AG04449 (cell line): ENCODE measurements at regions of chr4 and their contacts with region 1.

Region 1: GRCh38 chr4:106329041-106329618 is 12.8 kb downstream of the AIMP1 start:
- DNase-seq: no peak
- H3K4me3 ChIP-seq: no peak overlapping the region
- CTCF ChIP-seq: peak; percentile 54

Region 2: DNA sequence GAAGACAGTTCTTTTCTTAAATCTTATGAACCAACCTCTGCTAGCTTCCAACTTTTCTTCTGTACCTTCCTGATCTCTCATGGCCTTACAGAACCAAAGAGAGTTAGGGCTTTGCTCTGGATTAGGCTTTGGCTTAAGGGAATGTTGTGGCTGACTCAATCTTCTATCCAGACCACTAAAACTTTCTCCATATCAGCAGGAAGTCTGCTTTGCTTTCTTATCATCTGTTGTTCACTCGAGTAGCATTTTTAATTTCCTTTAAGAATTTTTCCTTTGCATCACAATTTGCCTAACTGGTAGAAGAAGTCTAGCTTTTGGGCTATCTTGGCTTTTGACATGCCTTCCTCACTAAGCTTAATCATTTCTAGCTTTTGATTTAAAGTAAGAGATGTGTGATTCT is 180.1 kb before region 1 on chr4:
- CTCF ChIA-PET with region 1: no interaction called
- POLR2A ChIA-PET with region 1: no interaction called
- DNase-seq: no peak
- H3K4me3 ChIP-seq: no peak overlapping the region
- CTCF ChIP-seq: no peak

Region 3: DNA sequence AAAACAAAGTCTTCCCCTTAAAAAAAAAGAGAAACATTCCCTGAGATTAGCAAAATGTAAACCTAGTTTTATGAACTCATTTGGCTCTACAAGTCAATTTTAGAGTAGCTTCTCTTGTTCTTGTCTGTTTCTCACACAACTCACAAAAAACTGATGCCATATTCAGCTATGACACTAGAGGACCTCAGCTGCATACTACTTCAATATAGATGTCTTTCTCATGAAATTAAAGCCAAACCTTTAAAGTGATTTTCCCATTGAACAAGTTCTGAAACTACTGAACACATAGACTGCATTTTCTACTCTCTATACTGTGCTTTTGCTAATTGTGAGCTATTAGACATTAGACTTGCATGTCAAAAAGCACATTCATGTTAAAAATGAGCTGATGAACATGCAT is 62.9 kb before region 1 on chr4:
- CTCF ChIA-PET with region 1: interaction called, 13 read pairs
- POLR2A ChIA-PET with region 1: no interaction called
- DNase-seq: peak; percentile 17
- H3K4me3 ChIP-seq: no peak overlapping the region
- CTCF ChIP-seq: peak; percentile 51

Region 4: DNA sequence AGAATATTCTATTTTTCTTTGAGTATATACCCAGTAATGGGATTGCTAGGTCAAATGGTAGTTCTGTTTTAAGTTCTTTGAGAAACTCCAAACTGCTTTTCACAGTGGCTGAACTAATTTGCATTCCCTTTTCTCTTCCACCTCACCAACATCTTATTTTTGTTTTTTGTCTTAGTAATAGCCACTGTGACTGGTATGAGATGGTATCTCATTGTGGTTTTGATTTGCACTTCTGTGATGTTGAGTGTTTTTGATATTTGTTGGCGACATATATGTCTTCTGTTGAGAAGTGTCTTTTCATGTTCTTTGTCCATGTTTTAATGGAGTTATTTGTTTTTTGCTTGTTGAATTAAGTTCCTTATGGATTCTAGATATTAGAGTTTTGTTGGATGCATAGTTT is 11.6 kb after region 1 on chr4:
- CTCF ChIA-PET with region 1: interaction called, 29 read pairs
- POLR2A ChIA-PET with region 1: no interaction called
- DNase-seq: no peak
- H3K4me3 ChIP-seq: no peak overlapping the region
- CTCF ChIP-seq: no peak

Region 5: DNA sequence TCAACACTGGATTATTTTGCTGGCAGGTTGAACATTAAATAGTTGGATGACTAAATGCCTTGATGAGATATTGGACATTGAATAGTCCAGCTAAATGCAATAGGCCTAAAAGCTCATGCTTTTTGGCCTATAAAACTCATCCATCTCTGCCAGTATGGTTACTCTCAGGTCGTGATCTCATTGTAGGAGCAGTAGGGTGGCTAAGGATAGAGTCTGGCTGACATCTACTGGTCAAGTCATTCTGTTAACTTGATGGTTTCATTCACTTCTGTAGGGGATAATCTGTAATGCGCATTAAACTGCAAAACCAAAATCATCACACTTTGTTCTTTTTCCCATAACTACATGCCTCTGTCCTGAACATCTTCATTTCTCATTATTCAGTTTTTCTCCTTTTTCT is 479.9 kb after region 1 on chr4:
- CTCF ChIA-PET with region 1: interaction called, 59 read pairs
- POLR2A ChIA-PET with region 1: no interaction called
- DNase-seq: no peak
- H3K4me3 ChIP-seq: no peak overlapping the region
- CTCF ChIP-seq: peak; percentile 43

Region 6: DNA sequence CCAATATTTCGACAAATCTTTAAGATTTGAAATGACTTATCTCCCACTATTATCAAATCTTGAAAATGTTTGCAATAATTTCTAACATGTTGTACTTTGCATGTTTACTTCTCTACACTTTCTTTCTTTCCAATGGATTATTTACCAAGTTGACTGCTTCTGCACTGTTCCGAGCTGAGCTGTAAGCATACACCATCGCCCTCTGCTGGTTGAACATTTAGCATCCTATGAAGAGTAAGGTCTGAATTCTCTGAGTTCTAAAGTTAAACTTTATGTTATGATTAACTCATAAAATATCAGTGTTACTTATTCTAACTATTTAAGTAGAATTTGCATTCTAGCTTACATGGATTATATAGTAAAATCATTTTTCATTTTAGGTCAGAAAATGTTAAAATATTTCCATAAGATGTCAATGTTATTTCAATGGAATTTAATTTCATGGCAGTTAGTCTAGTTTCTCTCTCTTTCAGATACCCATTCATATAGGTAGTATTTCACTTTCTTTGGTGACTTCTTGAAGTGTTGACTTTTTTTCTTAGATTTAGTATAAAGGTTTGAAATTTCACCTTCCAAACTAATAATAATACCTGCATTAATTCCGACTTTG is 569.6 kb after region 1 on chr4:
- CTCF ChIA-PET with region 1: interaction called, 16 read pairs
- POLR2A ChIA-PET with region 1: no interaction called
- DNase-seq: peak; percentile 14
- H3K4me3 ChIP-seq: no peak overlapping the region
- CTCF ChIP-seq: peak; percentile 62